Activated T-helper 1 cell treated with anti-CD3 and anti-CD28 coated beads, Interleukin-12 subunit alpha, Interleukin-12 subunit beta, Interleukin-2, Interleukin-4 antibody, amounts not matched to agents 30 ng/mL and 10 ng/mL and 1 ng/mL, durations not matched to agents 14 hours and 24 hours and 36 hours (primary cell): ENCODE measurements at regions of chr2 and their contacts with region 1.

Region 1: GRCh38 chr2:121530212-121530705 is 421 bp upstream of the RNU4ATAC start:
- DNase-seq: peak; percentile 72
- H3K4me3 Mint-ChIP-seq: peak overlapping the region; percentile 96
- H3K27ac Mint-ChIP-seq: peak overlapping the region; percentile 97
- H3K4me1 Mint-ChIP-seq: peaks cover 64% of the 10 kb centered on the region
- H3K27me3 Mint-ChIP-seq: no peaks in the 10 kb centered on the region

Region 2: GRCh38 chr2:121319953-121320352 is 210.3 kb before region 1 on chr2:
- intact Hi-C with region 1: no loop called
- DNase-seq: no peak
- H3K4me3 Mint-ChIP-seq: no peak overlapping the region
- H3K27ac Mint-ChIP-seq: no peak overlapping the region
- H3K4me1 Mint-ChIP-seq: no peaks in the 10 kb centered on the region
- H3K27me3 Mint-ChIP-seq: peaks cover 1% of the 10 kb centered on the region

Region 3: DNA sequence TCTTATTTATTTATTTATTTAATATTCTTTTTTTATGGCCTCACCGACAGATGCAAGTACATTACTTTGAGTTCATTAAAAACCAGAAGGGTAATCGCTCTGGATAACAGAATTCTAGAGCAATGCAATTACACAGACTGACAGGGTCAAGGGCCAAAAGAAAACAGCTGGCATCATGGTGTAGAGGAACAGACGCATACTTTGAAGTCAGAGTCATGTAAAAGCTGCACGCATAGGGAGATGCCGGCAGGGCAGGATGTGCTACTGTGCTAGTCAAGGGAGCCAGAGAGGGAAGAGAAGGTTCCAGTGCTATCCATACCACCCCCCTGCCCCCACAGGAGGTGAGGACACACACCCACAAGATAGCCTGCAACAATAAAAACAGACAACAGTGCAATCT is 130.1 kb before region 1 on chr2:
- intact Hi-C with region 1: loop called (anchors 1 kb)
- DNase-seq: no peak
- H3K4me3 Mint-ChIP-seq: no peak overlapping the region
- H3K27ac Mint-ChIP-seq: no peak overlapping the region
- H3K4me1 Mint-ChIP-seq: peaks cover 4% of the 10 kb centered on the region
- H3K27me3 Mint-ChIP-seq: no peaks in the 10 kb centered on the region

Region 4: DNA sequence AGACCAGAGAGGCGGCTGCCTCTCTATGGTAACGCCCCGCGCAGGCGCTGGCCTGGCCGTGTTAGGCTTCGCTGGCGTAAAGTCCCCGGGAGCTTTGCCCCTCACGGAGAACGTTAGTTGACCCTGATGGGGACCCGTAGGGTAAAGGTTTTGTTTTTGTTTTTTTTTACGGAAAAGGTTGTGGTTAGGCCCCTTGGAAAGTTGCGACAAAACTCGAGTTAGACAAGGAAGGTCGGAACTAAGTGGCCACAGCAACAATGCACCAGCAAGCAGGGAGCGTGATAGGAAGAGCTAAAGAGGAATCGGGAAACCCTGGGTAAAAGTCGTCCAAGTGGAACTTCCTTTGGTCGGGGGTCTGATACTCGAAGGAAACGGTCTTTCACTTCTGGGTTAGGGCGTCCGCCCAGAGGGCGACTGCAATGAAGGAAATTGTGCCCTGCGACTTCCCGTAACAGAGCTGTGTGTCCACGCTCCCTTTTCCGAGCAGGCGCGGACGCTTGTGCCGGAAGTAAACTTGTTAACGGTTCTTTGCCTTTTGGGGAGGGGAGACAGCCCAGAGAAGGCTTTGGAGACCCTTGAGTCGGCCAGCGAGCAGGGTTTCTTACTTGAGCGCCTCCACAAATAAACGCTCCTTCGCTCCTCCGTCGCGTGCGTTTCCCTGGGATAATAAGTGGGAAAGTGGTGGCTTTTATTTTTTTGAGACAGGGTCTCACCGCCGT is 119.5 kb after region 1 on chr2:
- intact Hi-C with region 1: loop called (anchors 1 kb)
- DNase-seq: peak; percentile 94
- H3K4me3 Mint-ChIP-seq: peak overlapping the region; percentile 97
- H3K27ac Mint-ChIP-seq: peak overlapping the region; percentile 100
- H3K4me1 Mint-ChIP-seq: peaks cover 56% of the 10 kb centered on the region
- H3K27me3 Mint-ChIP-seq: no peaks in the 10 kb centered on the region

Region 5: GRCh38 chr2:121722479-121722878 is 192.2 kb after region 1 on chr2:
- intact Hi-C with region 1: loop called (anchors 1 kb)
- DNase-seq: no peak
- H3K4me3 Mint-ChIP-seq: no peak overlapping the region
- H3K27ac Mint-ChIP-seq: peak overlapping the region; percentile 84
- H3K4me1 Mint-ChIP-seq: peaks cover 15% of the 10 kb centered on the region
- H3K27me3 Mint-ChIP-seq: no peaks in the 10 kb centered on the region

Region 6: GRCh38 chr2:121755236-121756111 is 225.2 kb after region 1 on chr2 and contains the start of gene TSN:
- intact Hi-C with region 1: loop called (anchors 1 kb)
- DNase-seq: peak; percentile 97
- H3K4me3 Mint-ChIP-seq: peak within 1 kb of the TSS; percentile 94
- H3K27ac Mint-ChIP-seq: peak within 1 kb of the TSS; percentile 92
- H3K4me1 Mint-ChIP-seq: peaks cover 26% of the 10 kb centered on the region
- H3K27me3 Mint-ChIP-seq: no peaks in the 10 kb centered on the region
- total RNA-seq, gene TSN: 72.3 and 80.1 TPM in 2 replicates